ENCODE measurements at regions of chr10 and their contacts with region 1.

Region 1: GRCh38 chr10:58952747-58953466 is 223.5 kb upstream of the PHYHIPL start:
- DNase-seq: no peak
- H3K4me3 Mint-ChIP-seq: no peak overlapping the region
- H3K27ac Mint-ChIP-seq: no peak overlapping the region
- H3K4me1 Mint-ChIP-seq: no peaks in the 10 kb centered on the region
- H3K27me3 Mint-ChIP-seq: peaks cover 1% of the 10 kb centered on the region

Region 2: DNA sequence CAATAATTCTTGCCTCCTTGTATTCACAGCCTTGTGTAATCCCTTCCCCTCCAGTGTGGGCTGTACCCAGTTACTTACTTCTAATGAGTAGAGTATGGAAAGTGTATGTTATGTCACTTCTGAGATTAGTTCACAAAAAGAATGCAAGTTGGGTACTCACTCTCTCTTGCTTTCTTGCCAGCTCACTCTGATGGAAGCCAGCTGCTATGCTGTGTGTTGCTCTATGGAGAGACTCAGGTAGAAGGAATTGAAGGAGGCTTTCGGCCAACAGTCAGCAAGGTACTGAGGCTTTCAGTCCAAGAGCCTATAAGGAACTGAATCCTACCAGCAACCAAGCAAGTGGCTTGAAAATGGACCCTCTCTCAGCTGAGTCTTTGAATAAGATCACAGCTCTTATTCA is 450.0 kb before region 1 on chr10:
- CTCF ChIA-PET with region 1: no interaction called
- POLR2A ChIA-PET with region 1: no interaction called
- intact Hi-C with region 1: no loop called
- DNase-seq: no peak
- H3K4me3 Mint-ChIP-seq: no peak overlapping the region
- H3K27ac Mint-ChIP-seq: no peak overlapping the region
- H3K4me1 Mint-ChIP-seq: no peaks in the 10 kb centered on the region
- H3K27me3 Mint-ChIP-seq: peaks cover 13% of the 10 kb centered on the region

Region 3: DNA sequence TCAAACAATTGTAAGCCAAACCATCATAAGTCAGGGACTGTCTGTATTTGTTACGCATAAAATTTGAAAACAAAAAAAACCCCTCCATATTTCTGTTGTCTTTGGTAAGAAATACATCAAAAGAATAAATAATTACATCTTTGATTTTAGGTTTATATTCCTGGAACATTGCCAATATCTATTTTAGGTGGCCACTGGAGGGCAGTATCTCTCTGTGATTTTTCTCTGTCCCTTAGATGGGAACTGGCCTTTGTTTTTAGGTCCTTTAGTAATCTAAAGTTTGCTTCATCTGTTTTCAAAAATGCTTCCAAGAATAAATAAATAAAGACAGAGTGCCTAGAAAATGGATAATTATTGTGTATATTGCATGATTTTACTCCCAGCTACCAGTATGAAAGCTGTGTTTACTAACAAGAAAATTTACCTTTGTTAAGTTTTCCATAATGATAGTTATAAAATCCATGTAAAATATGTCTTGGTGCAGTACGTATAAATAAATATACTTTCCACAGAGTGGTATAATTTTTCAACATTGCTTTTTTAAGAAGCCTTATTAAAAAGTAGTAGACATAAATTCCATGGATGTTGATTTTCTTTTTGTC is 287.8 kb after region 1 on chr10:
- CTCF ChIA-PET with region 1: no interaction called
- POLR2A ChIA-PET with region 1: no interaction called
- intact Hi-C with region 1: loop called (anchors 2 kb)
- DNase-seq: no peak
- H3K4me3 Mint-ChIP-seq: no peak overlapping the region
- H3K27ac Mint-ChIP-seq: no peak overlapping the region
- H3K4me1 Mint-ChIP-seq: no peaks in the 10 kb centered on the region
- H3K27me3 Mint-ChIP-seq: no peaks in the 10 kb centered on the region

Measured in activated CD4-positive, alpha-beta memory T cell treated with anti-CD3 and anti-CD28 coated beads for 36 hours (primary cell).